ENCODE measurements at regions of chr18 and their contacts with region 1.

Region 1: GRCh38 chr18:10387399-10387798 is 67.0 kb upstream of the APCDD1 start:
- DNase-seq: no peak
- ATAC-seq: no peak
- H3K4me3 ChIP-seq: no peak overlapping the region
- H3K27ac ChIP-seq: no peak overlapping the region
- H3K4me1 ChIP-seq: no peaks in the 10 kb centered on the region
- H3K27me3 ChIP-seq: peaks cover 3 to 4% of the 10 kb centered on the region in 2 experiments; a peak in 1 of 5 replicates
- CTCF ChIP-seq: no peak
- EP300 ChIP-seq: no peak
- POLR2A ChIP-seq: no peak
- RAD21 ChIP-seq: no peak

Region 2: DNA sequence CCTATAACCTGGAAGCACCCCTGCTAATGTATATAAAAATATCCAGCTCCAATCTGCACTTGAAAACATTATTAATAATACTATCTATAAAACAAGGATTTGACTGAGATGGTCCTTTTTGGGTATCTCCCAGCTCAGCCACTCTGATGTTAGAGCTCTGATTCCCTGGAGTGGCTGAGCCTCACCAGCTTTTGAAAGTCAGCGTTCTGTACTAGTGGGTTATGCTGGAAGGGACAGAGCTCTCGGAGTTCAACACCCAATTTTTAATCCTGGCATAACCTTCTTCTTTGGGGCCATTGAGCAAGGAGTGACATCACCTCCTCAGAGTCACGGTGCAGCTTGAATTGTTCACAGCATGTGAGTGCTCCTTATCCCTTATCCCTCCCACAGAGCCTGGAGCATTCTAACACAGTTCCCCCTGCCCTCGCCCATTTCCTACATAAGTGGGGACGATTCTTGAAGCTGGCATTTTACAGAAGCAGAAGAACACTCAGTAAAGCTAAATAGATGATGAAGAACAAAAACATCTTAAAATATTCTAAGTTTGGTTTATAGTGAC is 68.9 kb before region 1 on chr18:
- CTCF ChIA-PET with region 1: no interaction called
- POLR2A ChIA-PET with region 1: no interaction called
- in situ Hi-C with region 1: loop called (anchors 5 kb)
- intact Hi-C with region 1: no loop called
- DNase-seq: no peak
- ATAC-seq: no peak
- H3K4me3 ChIP-seq: no peak overlapping the region
- H3K27ac ChIP-seq: no peak overlapping the region
- H3K4me1 ChIP-seq: no peaks in the 10 kb centered on the region
- H3K27me3 ChIP-seq: peaks cover 7 to 19% of the 10 kb centered on the region in 2 experiments; a peak in 3 of 5 replicates
- CTCF ChIP-seq: no peak
- EP300 ChIP-seq: no peak
- POLR2A ChIP-seq: no peak
- RAD21 ChIP-seq: no peak

Region 3: GRCh38 chr18:10689236-10690034 is 302.0 kb after region 1 on chr18:
- CTCF ChIA-PET with region 1: no interaction called
- POLR2A ChIA-PET with region 1: no interaction called
- in situ Hi-C with region 1: no loop called
- intact Hi-C with region 1: no loop called
- DNase-seq: no peak
- ATAC-seq: no peak
- H3K4me3 ChIP-seq: no peak overlapping the region
- H3K27ac ChIP-seq: no peak overlapping the region
- H3K4me1 ChIP-seq: no peaks in the 10 kb centered on the region
- H3K27me3 ChIP-seq: peaks cover 33 to 44% of the 10 kb centered on the region in 2 experiments; a peak in 4 of 5 replicates
- CTCF ChIP-seq: no peak
- EP300 ChIP-seq: no peak
- POLR2A ChIP-seq: no peak
- RAD21 ChIP-seq: no peak